ENCODE measurements at regions of chr6 and their contacts with region 1.

Region 1: GRCh38 chr6:37207903-37208456 is 38.0 kb downstream of the PIM1 start:
- DNase-seq: peak; percentile 68 to 84
- H3K4me3 ChIP-seq: no peak overlapping the region
- H3K27ac ChIP-seq: no peak overlapping the region
- H3K4me1 ChIP-seq: peaks cover 33% of the 10 kb centered on the region
- H3K27me3 ChIP-seq: no peaks in the 10 kb centered on the region
- CTCF ChIP-seq: peak; percentile 91

Region 2: GRCh38 chr6:36885461-36886401 is 322.2 kb before region 1 on chr6 and contains the start of gene C6orf89:
- CTCF ChIA-PET with region 1: no interaction called
- POLR2A ChIA-PET with region 1: no interaction called
- intact Hi-C with region 1: loop called (anchors 10 kb)
- DNase-seq: peak; percentile 91 to 92
- H3K4me3 ChIP-seq: peak within 1 kb of the TSS; percentile 67
- H3K27ac ChIP-seq: peak within 1 kb of the TSS; percentile 61
- H3K4me1 ChIP-seq: peaks cover 19% of the 10 kb centered on the region
- H3K27me3 ChIP-seq: no peaks in the 10 kb centered on the region
- CTCF ChIP-seq: peak; percentile 75
- total RNA-seq, gene C6orf89: 28.7 and 40.1 TPM in 2 replicates

Region 3: GRCh38 chr6:37102279-37103168 is 105.5 kb before region 1 on chr6:
- CTCF ChIA-PET with region 1: no interaction called
- POLR2A ChIA-PET with region 1: interaction called, 3 read pairs
- intact Hi-C with region 1: loop called (anchors 1 kb)
- DNase-seq: peak; percentile 77 to 87
- H3K4me3 ChIP-seq: peak overlapping the region; percentile 43; the same call in 1 of the 2 replicates
- H3K27ac ChIP-seq: peak overlapping the region; percentile 97
- H3K4me1 ChIP-seq: peaks cover 55% of the 10 kb centered on the region
- H3K27me3 ChIP-seq: no peaks in the 10 kb centered on the region
- CTCF ChIP-seq: no peak

Region 4: DNA sequence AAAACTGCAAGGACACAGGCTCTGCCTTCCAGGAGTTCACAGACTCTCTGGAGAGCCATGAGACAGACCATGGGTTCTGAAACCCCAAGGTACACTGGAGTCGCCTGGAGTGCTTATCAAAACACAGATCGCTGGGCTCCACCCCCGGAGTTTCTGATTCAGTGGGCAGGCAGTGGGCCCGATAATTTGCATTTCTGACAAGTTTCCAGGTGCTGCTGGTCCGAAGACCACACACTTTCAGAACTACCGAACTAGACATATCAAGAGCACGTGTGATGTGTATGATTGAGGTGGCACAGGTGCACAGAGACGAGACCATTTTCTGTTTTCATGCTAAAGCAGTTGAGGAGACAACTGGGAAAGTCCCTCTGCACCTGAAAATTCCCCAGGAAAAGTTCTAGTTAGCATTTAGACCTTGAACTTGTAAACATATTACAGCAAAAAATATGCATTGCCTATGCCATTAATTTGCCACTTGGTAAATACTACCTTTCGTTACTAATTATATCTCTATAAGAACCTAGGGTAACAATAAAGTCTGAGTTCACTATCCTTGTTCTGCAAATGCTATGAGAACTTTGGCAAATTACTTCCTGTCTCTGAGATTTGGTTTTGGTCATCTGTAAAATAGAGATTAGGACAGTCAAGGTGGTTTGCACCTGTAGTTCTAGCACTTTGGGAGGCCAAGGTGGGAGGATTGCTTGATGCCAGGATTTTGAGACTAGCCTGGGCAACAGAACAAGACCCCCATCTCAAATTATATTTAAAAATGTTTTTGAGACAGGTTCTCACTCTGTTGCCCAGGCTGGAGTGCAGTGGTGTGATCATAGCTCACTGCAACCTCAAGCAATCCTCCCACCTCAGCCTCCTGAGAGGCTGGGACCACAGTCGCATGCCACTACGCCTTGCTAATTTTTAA is 52.3 kb before region 1 on chr6:
- CTCF ChIA-PET with region 1: interaction called, 11 read pairs
- POLR2A ChIA-PET with region 1: no interaction called
- intact Hi-C with region 1: no loop called
- DNase-seq: no peak
- H3K4me3 ChIP-seq: no peak overlapping the region
- H3K27ac ChIP-seq: no peak overlapping the region; the same call in 1 of the 2 replicates
- H3K4me1 ChIP-seq: peaks cover 17% of the 10 kb centered on the region
- H3K27me3 ChIP-seq: no peaks in the 10 kb centered on the region
- CTCF ChIP-seq: no peak

Region 5: DNA sequence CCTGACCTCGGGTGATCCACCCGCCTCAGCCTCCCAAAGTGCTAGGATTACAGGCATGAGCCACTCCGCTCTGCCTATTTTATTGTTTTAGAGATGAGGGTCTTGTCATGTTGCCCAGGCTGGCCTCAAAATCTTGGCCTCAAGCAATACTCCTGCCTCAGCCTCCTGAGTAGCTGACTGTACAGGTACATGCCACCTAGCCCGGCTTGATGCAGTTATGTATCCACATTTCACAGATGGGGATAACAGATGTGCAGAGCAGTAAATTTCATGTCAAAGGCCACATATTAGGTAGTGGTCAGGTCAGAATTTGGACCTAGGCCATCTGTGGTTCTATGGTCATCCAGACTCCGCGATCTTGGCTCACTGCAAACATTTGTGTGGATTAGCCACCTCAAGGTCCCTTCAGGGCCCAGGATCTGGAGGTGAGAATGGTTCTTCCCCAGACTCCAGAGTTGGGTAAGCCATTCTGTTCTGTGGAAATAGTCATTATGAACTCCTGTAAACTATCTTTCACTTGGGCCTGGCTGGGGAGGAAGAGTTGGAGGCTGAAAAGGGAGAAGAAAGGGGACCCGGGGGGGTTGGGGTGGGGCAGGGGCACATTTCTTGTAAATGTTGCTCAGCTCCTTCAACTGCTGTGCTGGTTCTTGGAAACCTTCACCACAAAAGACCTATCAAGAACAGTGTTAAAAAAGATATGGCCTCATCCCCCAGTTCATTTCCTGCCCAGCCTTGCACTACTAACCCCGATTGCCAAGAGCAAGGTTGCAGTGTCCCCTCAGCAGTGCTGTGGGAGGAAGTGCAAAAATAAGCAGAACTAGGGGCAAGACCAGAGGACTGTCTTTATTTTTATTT is 25.0 kb before region 1 on chr6:
- CTCF ChIA-PET with region 1: no interaction called
- POLR2A ChIA-PET with region 1: no interaction called
- intact Hi-C with region 1: no loop called
- DNase-seq: no peak
- H3K4me3 ChIP-seq: no peak overlapping the region
- H3K27ac ChIP-seq: no peak overlapping the region
- H3K4me1 ChIP-seq: no peaks in the 10 kb centered on the region
- H3K27me3 ChIP-seq: no peaks in the 10 kb centered on the region
- CTCF ChIP-seq: no peak

Region 6: GRCh38 chr6:37391120-37391519 is 183.1 kb after region 1 on chr6:
- CTCF ChIA-PET with region 1: no interaction called
- POLR2A ChIA-PET with region 1: no interaction called
- intact Hi-C with region 1: no loop called
- DNase-seq: no peak
- H3K4me3 ChIP-seq: no peak overlapping the region
- H3K27ac ChIP-seq: no peak overlapping the region
- H3K4me1 ChIP-seq: no peaks in the 10 kb centered on the region
- H3K27me3 ChIP-seq: no peaks in the 10 kb centered on the region
- CTCF ChIP-seq: no peak